Activated CD8-positive, alpha-beta T cell treated with anti-CD3 and anti-CD28 coated beads for 36 hours (primary cell): ENCODE measurements at regions of chr11 and their contacts with region 1.

Region 1: GRCh38 chr11:17230867-17231851 is 23.4 kb upstream of the PIK3C2A start:
- DNase-seq: peak; percentile 80
- ATAC-seq: peak; percentile 94
- H3K4me3 Mint-ChIP-seq: no peak overlapping the region
- H3K27ac Mint-ChIP-seq: no peak overlapping the region
- H3K4me1 Mint-ChIP-seq: peaks cover 20% of the 10 kb centered on the region
- H3K27me3 Mint-ChIP-seq: peaks cover 3% of the 10 kb centered on the region
- CTCF ChIP-seq: no peak

Region 2: DNA sequence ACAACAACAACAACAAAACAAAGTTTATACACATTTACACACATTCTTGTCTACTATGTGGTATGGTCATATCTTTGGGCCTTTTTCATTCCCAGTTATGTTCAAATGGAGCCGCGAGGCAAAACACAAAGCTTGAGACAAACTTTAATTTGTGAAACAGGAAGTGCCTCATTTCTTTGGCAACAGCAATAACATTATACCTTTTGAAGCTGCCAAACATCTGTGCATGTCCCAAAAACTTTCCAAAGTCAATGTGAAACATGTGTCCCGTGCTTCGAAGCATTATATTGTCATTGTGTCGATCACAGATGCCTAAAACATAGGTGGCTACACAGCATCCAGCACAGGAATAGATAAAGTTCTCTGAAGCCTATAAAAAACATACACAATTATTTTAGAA is 128.7 kb before region 1 on chr11:
- CTCF ChIA-PET with region 1: no interaction called
- POLR2A ChIA-PET with region 1: no interaction called
- intact Hi-C with region 1: no loop called
- DNase-seq: no peak
- ATAC-seq: no peak
- H3K4me3 Mint-ChIP-seq: no peak overlapping the region
- H3K27ac Mint-ChIP-seq: no peak overlapping the region
- H3K4me1 Mint-ChIP-seq: no peaks in the 10 kb centered on the region
- H3K27me3 Mint-ChIP-seq: no peaks in the 10 kb centered on the region
- CTCF ChIP-seq: no peak

Region 3: DNA sequence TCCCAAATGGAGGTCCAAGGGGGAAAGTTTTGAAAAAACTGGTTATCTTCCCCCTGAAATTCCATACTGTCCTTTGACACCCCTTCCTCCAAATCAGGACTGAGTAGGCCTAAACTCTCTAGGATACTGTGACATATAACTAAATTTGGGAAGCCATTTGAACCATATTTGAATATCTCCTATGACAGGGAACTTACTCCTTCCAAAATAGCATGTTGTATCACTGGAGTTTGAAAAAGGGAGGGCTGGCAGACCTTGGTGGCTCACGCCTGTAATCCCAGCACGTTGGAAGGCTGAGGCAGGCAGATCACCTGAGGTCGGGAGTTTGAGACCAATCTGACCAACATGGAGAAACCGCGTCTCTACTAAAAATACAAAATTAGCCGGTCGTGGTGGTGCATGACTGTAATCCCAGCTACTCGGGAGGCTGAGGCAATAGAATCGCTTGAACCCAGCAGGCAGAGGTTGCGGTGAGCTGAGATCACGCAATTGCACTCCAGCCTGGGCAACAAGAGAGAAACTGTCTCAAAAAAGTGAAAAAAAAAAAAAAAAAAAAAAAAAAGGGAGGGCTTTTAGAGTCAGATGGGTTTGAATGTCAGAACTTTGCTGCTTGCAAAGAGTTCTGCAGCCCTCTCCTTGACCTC is 65.8 kb before region 1 on chr11:
- CTCF ChIA-PET with region 1: no interaction called
- POLR2A ChIA-PET with region 1: no interaction called
- intact Hi-C with region 1: no loop called
- DNase-seq: no peak
- ATAC-seq: no peak
- H3K4me3 Mint-ChIP-seq: no peak overlapping the region
- H3K27ac Mint-ChIP-seq: no peak overlapping the region
- H3K4me1 Mint-ChIP-seq: peaks cover 44% of the 10 kb centered on the region
- H3K27me3 Mint-ChIP-seq: no peaks in the 10 kb centered on the region
- CTCF ChIP-seq: no peak

Region 4: DNA sequence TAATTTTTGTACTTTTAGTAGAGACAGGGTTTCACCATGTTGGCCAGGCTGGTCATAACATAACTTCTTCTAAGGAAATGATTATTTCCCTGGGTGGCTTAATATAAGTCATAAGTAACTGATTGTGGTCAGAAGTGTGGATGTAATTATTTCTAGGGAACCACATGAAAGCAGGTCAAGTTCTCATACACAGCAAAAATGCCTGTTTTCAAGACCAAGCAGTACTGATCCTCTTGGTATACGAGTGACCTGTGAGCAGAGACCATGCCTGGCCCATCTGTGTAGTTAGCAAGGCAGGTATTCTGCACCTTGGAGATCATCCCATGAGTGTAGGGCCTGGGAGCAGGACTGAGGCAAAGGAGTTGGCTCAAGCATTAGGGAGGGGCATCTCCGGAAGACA is 12.9 kb after region 1 on chr11:
- CTCF ChIA-PET with region 1: interaction called, 10 read pairs
- POLR2A ChIA-PET with region 1: no interaction called
- intact Hi-C with region 1: no loop called
- DNase-seq: peak; percentile 11
- ATAC-seq: peak; percentile 78
- H3K4me3 Mint-ChIP-seq: no peak overlapping the region
- H3K27ac Mint-ChIP-seq: no peak overlapping the region
- H3K4me1 Mint-ChIP-seq: peaks cover 5% of the 10 kb centered on the region
- H3K27me3 Mint-ChIP-seq: peaks cover 9% of the 10 kb centered on the region
- CTCF ChIP-seq: no peak

Region 5: GRCh38 chr11:17298302-17298701 is 67.1 kb after region 1 on chr11:
- CTCF ChIA-PET with region 1: interaction called, 7 read pairs
- POLR2A ChIA-PET with region 1: no interaction called
- intact Hi-C with region 1: loop called (anchors 2 kb)
- DNase-seq: peak; percentile 86
- ATAC-seq: peak; percentile 76
- H3K4me3 Mint-ChIP-seq: peak overlapping the region; percentile 12
- H3K27ac Mint-ChIP-seq: peak overlapping the region; percentile 61
- H3K4me1 Mint-ChIP-seq: peaks cover 45% of the 10 kb centered on the region
- H3K27me3 Mint-ChIP-seq: no peaks in the 10 kb centered on the region
- CTCF ChIP-seq: no peak

Region 6: DNA sequence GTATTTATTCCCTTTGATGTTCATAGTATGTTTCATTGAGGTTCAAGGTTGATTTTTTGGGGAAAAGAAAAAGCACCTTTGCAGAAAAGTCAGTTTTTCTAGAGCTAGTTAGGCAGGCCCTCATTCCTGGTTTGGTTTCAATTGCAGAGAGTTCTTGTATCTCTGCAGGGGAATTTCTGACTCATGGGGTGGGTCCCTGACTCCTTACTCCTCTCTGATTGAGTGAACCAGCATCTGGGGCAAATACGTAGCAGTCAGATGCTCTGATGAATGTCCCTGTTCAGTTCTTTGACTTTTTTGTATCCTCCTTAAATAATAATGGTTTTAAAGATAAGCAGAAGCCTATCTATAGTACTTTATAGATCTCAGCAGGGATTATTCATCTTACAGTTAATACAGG is 112.7 kb after region 1 on chr11:
- CTCF ChIA-PET with region 1: interaction called, 13 read pairs
- POLR2A ChIA-PET with region 1: interaction called, 4 read pairs
- intact Hi-C with region 1: no loop called
- DNase-seq: peak; percentile 85
- ATAC-seq: peak; percentile 98
- H3K4me3 Mint-ChIP-seq: no peak overlapping the region
- H3K27ac Mint-ChIP-seq: peak overlapping the region; percentile 28
- H3K4me1 Mint-ChIP-seq: peaks cover 17% of the 10 kb centered on the region
- H3K27me3 Mint-ChIP-seq: no peaks in the 10 kb centered on the region
- CTCF ChIP-seq: no peak

Region 7: DNA sequence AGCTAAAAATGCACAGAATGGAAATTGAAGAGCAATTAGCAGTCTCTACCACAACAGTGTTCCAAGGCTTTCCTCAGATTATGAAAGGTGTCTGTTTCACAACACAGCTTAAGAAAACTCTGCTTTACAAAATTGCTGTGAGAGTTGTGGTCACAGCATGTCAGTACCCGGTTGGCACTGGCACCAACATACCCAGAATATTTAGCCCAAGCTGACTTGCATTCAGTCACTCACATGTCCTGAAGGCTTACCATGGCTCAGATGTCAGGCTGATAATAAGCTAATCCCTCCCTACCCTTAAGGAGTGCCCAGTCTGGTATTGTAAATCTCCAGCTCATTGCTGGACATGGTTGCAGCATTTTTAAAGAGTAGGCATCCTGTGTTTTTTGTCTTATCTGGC is 135.3 kb after region 1 on chr11:
- CTCF ChIA-PET with region 1: interaction called, 14 read pairs
- POLR2A ChIA-PET with region 1: no interaction called
- intact Hi-C with region 1: no loop called
- DNase-seq: no peak
- ATAC-seq: no peak
- H3K4me3 Mint-ChIP-seq: no peak overlapping the region
- H3K27ac Mint-ChIP-seq: no peak overlapping the region
- H3K4me1 Mint-ChIP-seq: peaks cover 3% of the 10 kb centered on the region
- H3K27me3 Mint-ChIP-seq: no peaks in the 10 kb centered on the region
- CTCF ChIP-seq: no peak

Region 8: DNA sequence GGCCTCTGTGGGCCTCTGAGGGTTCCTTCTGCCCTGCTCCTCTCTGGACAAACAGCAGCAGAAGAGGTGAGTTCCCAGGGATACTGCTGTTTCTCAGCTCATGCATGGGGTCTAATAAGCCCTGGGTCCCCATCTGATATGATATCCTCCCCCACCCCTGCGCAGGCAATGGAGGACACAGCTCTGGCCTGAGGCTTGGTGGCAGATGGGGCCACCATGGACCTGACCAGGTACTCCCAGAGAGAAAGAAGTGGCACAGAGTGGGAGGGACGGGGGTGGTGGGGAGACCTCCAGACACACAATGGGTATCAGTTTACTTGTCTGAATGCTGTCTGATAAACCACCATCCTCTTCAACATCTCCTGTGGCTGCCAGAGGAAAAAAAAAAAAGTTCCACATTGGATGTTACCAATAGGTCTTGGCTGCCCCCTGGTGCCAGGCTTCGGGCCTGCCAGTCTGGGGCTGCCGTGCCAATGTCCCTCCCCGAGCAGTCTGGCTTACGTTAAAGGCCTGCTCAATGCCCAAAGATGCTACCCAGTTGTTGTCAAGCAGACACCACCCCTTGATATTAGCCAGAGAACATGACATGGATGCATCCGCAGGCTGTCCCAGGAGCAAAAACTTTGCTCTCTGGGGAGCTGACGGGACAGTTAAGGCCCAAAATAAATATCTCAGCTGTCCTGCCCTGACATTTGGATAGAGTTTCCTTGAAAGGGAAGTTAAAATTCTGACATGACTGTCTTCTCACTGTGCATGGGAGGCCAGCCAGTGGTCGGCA is 273.4 kb after region 1 on chr11:
- CTCF ChIA-PET with region 1: interaction called, 22 read pairs
- POLR2A ChIA-PET with region 1: no interaction called
- intact Hi-C with region 1: loop called (anchors 5 kb)
- DNase-seq: peak; percentile 87
- ATAC-seq: peak; percentile 91
- H3K4me3 Mint-ChIP-seq: no peak overlapping the region
- H3K27ac Mint-ChIP-seq: no peak overlapping the region
- H3K4me1 Mint-ChIP-seq: no peaks in the 10 kb centered on the region
- H3K27me3 Mint-ChIP-seq: peaks cover 7% of the 10 kb centered on the region
- CTCF ChIP-seq: peak; percentile 86